ENCODE measurements at regions of chr5 and their contacts with region 1.

Region 1: DNA sequence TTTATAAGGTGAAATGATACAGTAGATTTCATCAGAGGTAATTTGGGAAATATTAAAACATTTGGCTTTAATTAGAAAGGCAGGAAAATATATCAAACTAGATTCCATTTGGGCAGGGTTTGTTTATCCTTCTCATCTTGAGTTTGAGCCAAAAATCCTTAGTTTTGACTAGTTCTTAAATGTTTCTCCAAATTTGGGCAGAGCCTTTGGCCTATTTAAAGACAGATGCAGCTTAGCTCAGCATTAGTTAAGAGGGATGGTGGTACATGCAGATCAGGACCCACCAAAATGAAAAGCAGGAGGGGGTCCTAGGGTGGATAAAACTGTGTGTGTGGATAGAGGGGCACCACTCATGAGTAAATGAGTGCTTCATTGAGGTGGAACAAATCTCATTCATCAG is 20.3 kb upstream of the ARRDC3 start:
- DNase-seq: no peak
- ATAC-seq: no peak
- H3K4me3 ChIP-seq: no peak overlapping the region
- H3K27ac ChIP-seq: no peak overlapping the region
- H3K4me1 ChIP-seq: no peaks in the 10 kb centered on the region
- H3K27me3 ChIP-seq: no peaks in the 10 kb centered on the region
- CTCF ChIP-seq: no peak
- POLR2A ChIP-seq: no peak

Region 2: DNA sequence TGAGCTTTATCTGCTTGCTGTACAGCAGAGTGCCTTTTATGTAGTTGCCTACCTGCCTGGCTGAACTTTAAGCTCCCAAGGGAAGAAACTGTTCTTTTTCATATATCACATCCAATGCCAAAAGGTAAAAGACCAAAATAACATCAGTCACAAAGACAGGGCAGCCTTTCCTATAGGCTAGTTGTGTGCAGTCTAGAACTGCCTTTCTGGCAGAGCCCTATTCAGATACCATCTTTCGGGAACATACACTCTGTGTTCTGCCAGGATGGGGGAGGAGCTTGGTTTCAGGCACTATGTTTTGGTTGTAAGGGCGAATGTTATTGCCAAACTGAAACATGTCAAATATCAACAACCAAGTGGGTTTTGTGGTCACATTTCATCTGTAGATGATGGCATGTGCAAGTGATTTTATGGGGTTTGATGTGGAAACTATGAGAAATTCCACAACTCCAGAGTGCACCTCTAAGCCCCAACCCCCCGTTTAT is 530.4 kb before region 1 on chr5:
- in situ Hi-C with region 1: loop called in 2 of 4 experiments (anchors 5 to 25 kb)
- intact Hi-C with region 1: no loop called
- DNase-seq: peak in 1 of 2 donors; percentile 29
- ATAC-seq: peak; percentile 30 to 85
- H3K4me3 ChIP-seq: no peak overlapping the region
- H3K27ac ChIP-seq: peak overlapping the region in 1 of 4 donors; percentile 51
- H3K4me1 ChIP-seq: peaks cover 0 to 16% of the 10 kb centered on the region in 2 donors
- H3K27me3 ChIP-seq: no peaks in the 10 kb centered on the region
- CTCF ChIP-seq: no peak
- POLR2A ChIP-seq: no peak

Region 3: GRCh38 chr5:91383027-91383955 is 20.1 kb before region 1 on chr5 and contains the start of gene ARRDC3:
- in situ Hi-C with region 1: no loop called
- intact Hi-C with region 1: no loop called
- DNase-seq: peak; percentile 93 to 96
- ATAC-seq: peak; percentile 48 to 70
- H3K4me3 ChIP-seq: peak within 1 kb of the TSS; percentile 67 to 96 (median 85)
- H3K27ac ChIP-seq: peak within 1 kb of the TSS; percentile 90 to 100 (median 94)
- H3K4me1 ChIP-seq: peaks cover 17 to 20% of the 10 kb centered on the region in 2 donors
- H3K27me3 ChIP-seq: no peaks in the 10 kb centered on the region
- CTCF ChIP-seq: peak in 1 of 5 experiments; percentile 24
- POLR2A ChIP-seq: peak; percentile 95 to 98
- total RNA-seq, gene ARRDC3: 64.1 to 116 (median 87.7) TPM

Measured in gastrocnemius medialis (tissue), 4 donors.